ENCODE measurements at regions of chrX and their contacts with region 1.

Region 1: GRCh38 chrX:12570859-12571501 is 220.2 kb upstream of the PRPS2 start:
- DNase-seq: no peak
- ATAC-seq: no peak
- H3K4me3 ChIP-seq: no peak overlapping the region
- H3K4me3 Mint-ChIP-seq: no peak overlapping the region
- H3K27ac ChIP-seq: no peak overlapping the region
- H3K27ac Mint-ChIP-seq: no peak overlapping the region
- H3K4me1 ChIP-seq: no peaks in the 10 kb centered on the region
- H3K4me1 Mint-ChIP-seq: no peaks in the 10 kb centered on the region
- H3K27me3 ChIP-seq: no peaks in the 10 kb centered on the region
- H3K27me3 Mint-ChIP-seq: no peaks in the 10 kb centered on the region
- CTCF ChIP-seq: no peak

Region 2: GRCh38 chrX:12370497-12370986 is 200.4 kb before region 1 on chrX:
- CTCF ChIA-PET with region 1: no interaction called
- POLR2A ChIA-PET with region 1: no interaction called
- intact Hi-C with region 1: no loop called
- DNase-seq: no peak
- ATAC-seq: no peak
- H3K4me3 ChIP-seq: no peak overlapping the region
- H3K4me3 Mint-ChIP-seq: no peak overlapping the region
- H3K27ac ChIP-seq: no peak overlapping the region
- H3K27ac Mint-ChIP-seq: no peak overlapping the region
- H3K4me1 ChIP-seq: no peaks in the 10 kb centered on the region
- H3K4me1 Mint-ChIP-seq: no peaks in the 10 kb centered on the region
- H3K27me3 ChIP-seq: no peaks in the 10 kb centered on the region
- H3K27me3 Mint-ChIP-seq: no peaks in the 10 kb centered on the region
- CTCF ChIP-seq: no peak

Region 3: DNA sequence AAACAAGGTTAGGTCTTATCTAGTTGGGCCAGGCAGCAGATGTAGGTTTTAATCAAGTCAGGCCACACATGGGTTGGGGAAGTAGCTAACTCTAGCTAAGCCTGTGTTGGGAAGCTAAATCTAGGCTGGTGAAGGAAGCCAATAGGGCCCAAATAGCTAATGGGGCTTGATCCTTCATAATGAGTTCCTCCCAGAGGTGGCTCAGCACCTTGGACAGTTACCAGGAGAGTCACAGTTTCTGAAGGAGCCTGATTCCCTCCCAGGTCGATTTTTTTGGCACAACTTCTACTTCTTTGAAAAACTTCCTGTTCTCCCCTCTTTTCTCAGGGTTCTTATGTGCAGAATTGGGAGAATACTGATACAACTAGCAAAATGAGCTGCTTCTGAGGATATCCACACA is 22.2 kb before region 1 on chrX:
- CTCF ChIA-PET with region 1: no interaction called
- POLR2A ChIA-PET with region 1: no interaction called
- intact Hi-C with region 1: no loop called
- DNase-seq: no peak
- ATAC-seq: no peak
- H3K4me3 ChIP-seq: no peak overlapping the region
- H3K4me3 Mint-ChIP-seq: no peak overlapping the region
- H3K27ac ChIP-seq: no peak overlapping the region
- H3K27ac Mint-ChIP-seq: no peak overlapping the region
- H3K4me1 ChIP-seq: no peaks in the 10 kb centered on the region
- H3K4me1 Mint-ChIP-seq: no peaks in the 10 kb centered on the region
- H3K27me3 ChIP-seq: no peaks in the 10 kb centered on the region
- H3K27me3 Mint-ChIP-seq: no peaks in the 10 kb centered on the region
- CTCF ChIP-seq: no peak

Region 4: GRCh38 chrX:12648995-12649394 is 78.0 kb after region 1 on chrX:
- CTCF ChIA-PET with region 1: no interaction called
- POLR2A ChIA-PET with region 1: no interaction called
- intact Hi-C with region 1: loop called in 1 of 2 experiments (anchors 2 kb)
- DNase-seq: no peak
- ATAC-seq: no peak
- H3K4me3 ChIP-seq: no peak overlapping the region
- H3K4me3 Mint-ChIP-seq: no peak overlapping the region
- H3K27ac ChIP-seq: no peak overlapping the region
- H3K27ac Mint-ChIP-seq: no peak overlapping the region
- H3K4me1 ChIP-seq: no peaks in the 10 kb centered on the region
- H3K4me1 Mint-ChIP-seq: no peaks in the 10 kb centered on the region
- H3K27me3 ChIP-seq: no peaks in the 10 kb centered on the region
- H3K27me3 Mint-ChIP-seq: peaks cover 6% of the 10 kb centered on the region
- CTCF ChIP-seq: no peak